ENCODE measurements at regions of chr1 and their contacts with region 1.

Region 1: DNA sequence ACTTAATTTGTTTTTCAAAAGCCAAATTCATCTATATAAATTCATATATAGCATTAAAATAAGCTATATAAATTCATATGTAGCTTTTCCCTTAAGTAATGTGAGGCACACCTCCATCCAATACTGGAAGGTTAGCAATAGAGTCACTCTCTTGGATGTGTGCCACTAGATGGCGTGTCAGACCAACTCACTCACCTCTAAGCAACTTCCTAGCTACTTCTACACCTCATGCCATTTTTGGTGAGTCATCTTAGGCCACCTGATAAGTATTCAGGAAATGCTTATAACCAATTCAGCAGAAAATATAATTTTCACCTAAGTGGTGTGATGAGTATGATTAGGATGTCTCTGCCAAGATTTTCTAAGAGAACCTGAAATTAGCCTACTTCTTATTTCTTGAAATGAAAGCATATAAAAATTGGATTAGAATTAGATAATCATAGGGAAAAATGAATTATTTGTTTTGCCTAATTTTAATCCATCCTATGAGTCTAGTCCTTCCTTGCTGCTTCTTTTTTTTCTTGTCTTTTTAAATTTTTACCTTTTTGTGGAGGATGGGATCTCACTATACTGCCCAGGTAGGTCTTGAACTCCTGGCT is 34.4 kb upstream of the TADA1 start:
- DNase-seq: peak; percentile 74
- CTCF ChIP-seq: peak; percentile 82

Region 2: DNA sequence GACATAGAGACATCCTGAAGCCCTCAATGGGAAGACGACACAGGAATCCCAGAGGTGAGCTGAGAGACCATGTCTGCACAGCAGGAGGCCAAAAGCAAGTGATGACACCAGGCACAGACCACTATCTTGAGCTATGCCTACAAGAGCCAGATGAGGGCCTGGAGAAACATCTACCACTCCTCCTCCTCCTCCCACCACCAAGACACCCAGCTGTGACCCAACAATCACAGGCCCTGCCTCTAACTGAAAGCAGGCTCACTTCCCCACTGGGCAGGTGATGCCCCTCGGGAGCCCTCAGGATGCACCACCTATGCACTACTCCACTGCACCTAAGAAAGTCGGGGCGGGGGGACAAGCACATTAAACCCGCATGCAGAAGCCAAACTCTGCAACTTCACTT is 50.9 kb before region 1 on chr1:
- CTCF ChIA-PET with region 1: no interaction called
- POLR2A ChIA-PET with region 1: no interaction called
- DNase-seq: no peak
- CTCF ChIP-seq: no peak

Region 3: GRCh38 chr1:166884040-166884642 is 26.4 kb before region 1 on chr1:
- CTCF ChIA-PET with region 1: interaction called, 13 read pairs
- POLR2A ChIA-PET with region 1: no interaction called
- DNase-seq: peak; percentile 52
- CTCF ChIP-seq: peak; percentile 48

Region 4: DNA sequence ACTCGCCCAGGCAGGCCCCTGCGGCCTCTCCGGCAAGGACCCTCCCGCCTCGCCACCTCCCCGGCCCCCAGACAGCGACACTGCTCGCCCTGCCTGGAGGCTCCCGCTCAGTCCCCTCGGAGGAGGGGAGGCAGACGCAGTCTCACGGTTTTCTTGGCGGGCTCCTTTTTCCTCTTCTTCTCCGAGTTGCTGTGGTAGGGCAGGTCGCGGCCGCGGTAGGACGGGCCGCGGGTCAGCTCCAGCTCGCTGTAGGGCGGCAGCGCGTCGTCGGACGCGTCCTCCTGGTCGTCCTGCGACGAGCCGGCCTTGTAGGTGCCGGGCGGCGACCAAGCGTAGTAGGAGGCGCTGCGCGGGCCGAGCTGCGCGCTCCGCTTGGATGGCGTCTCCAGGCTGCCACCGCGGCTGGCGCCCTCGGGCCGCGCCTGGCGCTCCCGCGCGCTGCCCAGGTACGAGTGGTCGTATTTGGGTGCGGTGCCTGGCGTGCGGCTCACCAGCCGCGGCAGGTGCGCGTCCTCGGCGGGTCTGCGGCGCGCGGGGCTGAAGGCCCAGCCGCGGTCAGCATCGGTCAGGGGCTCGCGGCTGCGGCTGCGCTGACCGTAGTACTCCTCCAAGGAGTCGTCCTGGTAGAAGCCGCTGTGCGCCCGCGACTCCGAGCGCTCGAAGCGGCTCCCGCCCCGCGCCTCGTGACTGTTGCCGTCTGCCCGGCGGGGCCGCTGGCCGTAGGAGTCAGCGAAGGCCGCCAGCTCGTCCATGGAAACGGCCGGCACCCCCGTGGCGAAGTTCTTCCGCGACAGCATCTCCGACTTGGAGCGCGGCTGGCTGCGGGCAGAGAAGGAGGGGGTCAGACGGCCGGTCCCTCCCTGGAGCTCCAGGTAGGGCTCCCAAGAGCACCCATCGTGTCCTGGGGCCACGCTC is 10.3 kb after region 1 on chr1:
- CTCF ChIA-PET with region 1: interaction called, 21 read pairs
- POLR2A ChIA-PET with region 1: no interaction called
- DNase-seq: peak; percentile 38
- CTCF ChIP-seq: no peak

Region 5: DNA sequence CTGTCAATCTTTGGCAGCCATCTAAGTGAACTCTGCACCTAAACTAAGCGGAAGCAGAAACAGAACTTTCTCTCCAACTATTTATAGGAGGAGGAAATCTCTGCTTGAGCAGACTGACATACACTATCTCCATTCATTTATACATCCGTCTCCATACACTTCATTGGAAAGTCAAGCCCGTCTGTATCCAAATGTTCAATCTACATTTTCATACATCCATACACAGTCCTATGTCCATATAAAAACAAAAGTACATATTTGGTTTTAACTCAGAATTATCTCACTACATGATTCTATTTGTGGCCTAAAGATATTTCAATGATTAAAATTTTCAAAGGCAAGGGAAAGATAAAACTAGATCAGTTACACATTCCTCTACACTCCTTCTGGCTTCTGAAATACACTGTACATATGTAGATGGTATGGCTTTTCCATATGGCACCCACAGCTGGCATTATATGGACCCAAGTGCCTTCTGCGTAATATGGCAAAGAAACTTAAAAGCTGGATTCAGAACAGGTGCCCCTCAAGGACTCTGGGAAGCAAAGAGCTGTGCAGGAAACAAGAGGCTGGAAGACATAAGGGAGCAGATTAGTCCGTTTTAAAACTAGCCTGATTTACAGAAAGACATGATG is 29.4 kb after region 1 on chr1:
- CTCF ChIA-PET with region 1: interaction called, 23 read pairs
- POLR2A ChIA-PET with region 1: no interaction called
- DNase-seq: no peak
- CTCF ChIP-seq: no peak

Region 6: DNA sequence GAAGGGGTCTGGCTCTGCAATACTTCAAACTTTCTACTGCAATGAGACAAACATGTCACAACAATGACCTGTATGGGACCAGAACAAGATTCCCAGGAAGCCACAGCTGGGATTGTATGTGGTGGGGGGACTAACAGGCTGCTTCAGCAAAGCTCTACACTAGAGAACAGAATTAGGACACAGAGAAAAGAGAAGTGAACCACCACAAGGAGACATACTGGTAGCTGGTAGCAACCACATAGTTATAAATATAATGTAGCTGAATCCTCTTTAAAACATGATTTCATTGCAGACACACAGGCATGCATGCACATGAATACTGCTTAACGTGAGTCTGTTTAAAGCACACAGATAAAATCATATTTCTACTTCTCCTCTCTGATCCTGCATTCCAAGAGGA is 68.3 kb after region 1 on chr1:
- CTCF ChIA-PET with region 1: interaction called, 20 read pairs
- POLR2A ChIA-PET with region 1: no interaction called
- DNase-seq: peak; percentile 29
- CTCF ChIP-seq: no peak

Region 7: DNA sequence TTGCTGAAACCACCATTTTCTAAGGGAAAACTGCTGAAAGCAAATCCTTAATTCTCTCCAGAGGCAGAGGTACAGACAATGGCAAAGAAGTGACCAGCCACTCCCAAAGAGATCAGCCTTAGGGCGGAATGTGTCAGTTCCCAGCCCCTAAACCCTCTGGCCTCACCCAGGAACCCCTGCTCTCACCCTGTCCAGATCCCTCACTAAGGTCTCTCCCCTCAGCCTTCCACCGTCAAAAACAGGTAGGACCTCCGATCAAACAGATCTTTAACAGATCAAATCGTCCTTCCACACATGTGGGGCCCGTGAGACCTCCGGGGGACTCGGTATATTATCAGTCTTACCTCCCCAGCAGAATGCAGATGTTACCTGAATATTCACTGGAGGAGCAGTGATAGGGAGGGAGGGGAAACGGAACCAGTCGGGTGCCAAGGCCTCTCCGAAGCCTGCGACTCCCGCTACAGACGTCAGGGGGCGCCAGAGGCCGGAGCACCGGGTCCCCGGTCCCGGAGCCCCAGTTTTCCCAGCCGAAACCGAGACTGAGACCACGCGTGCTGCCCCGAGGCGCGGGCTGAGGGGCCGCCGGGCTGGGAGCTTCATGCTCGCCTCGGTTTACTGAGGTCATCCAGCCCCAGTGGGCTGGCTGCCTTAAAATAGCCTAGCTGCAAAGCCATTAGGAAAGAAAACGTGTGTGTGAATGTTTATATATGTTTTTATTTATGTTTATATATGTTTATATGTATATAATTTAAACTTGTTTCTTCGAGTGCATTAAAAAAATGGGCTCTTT is 156.0 kb after region 1 on chr1:
- CTCF ChIA-PET with region 1: interaction called, 659 read pairs
- POLR2A ChIA-PET with region 1: no interaction called
- DNase-seq: peak; percentile 90
- CTCF ChIP-seq: peak; percentile 94

Measured in GM10248 (cell line).